Activated T-helper 1 cell treated with anti-CD3 and anti-CD28 coated beads, Interleukin-12 subunit alpha, Interleukin-12 subunit beta, Interleukin-2, Interleukin-4 antibody, amounts not matched to agents 30 ng/mL and 10 ng/mL and 1 ng/mL, durations not matched to agents 14 hours and 24 hours and 36 hours (primary cell): ENCODE measurements at regions of chr2 and their contacts with region 1.

Region 1: DNA sequence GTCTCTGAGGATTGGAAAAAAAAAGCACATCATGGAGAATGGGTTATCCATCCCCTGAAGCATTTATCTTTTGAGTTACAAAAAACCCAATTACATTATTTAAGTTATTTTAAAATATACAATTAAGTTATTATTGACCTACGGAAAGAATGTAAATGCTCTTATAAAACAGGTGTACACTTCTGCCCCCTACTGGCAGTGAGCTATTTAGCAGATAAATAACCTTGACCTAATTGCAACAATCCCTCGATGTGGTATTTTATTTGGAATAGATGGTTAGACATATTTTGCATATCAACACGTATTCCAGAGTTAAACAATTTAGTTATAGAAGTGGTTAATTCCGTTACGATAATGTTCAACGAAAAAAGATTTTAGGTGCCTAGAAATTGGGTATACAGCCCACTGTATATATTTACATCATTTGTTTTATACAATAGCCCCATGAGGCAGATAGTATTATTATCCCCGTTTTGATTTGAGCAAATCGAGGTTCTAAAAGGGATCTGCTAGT is 9.1 kb upstream of the DAW1 start:
- DNase-seq: no peak
- H3K4me3 Mint-ChIP-seq: no peak overlapping the region
- H3K27ac Mint-ChIP-seq: no peak overlapping the region
- H3K4me1 Mint-ChIP-seq: no peaks in the 10 kb centered on the region
- H3K27me3 Mint-ChIP-seq: peaks cover 5% of the 10 kb centered on the region

Region 2: DNA sequence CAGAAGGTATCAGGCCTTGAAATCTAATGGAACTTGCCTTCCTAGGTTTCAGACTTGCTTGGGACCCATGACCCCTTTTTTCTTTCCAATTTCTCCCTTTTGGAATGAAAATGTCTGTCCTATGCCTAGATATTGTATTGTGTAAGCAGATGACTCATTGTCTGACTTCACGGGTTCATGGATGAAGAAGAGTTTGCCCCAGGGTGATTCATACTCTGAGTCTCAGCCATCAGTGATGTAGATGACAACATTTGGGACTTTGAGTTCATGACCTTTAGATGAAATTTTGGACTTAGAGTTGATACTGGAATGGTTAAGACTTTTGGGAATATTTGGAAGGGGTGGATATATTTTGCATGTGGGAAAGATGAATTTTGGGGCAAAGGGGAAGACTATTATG is 206.8 kb before region 1 on chr2:
- intact Hi-C with region 1: loop called (anchors 1 kb)
- DNase-seq: no peak
- H3K4me3 Mint-ChIP-seq: no peak overlapping the region
- H3K27ac Mint-ChIP-seq: no peak overlapping the region
- H3K4me1 Mint-ChIP-seq: no peaks in the 10 kb centered on the region
- H3K27me3 Mint-ChIP-seq: peaks cover 3% of the 10 kb centered on the region

Region 3: DNA sequence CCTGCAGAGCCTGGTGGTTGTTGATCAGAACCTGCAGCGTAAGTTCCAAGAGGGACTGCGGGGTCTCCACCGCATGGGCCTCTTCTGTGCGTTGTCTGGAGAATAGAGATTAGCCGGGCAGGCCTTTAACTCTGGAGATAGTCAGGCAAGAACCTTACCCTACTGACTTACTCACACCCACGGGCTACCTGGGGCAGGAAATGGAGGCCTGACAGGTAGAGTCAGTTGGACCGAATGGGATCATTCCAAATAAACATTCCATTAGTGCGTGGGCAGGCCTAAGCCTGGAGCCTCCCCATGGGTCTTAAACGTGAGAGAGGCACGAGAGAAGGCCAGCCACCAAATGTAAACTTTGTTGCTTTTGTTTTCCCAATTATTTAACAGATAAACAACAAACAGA is 118.0 kb before region 1 on chr2:
- intact Hi-C with region 1: loop called (anchors 1 kb)
- DNase-seq: no peak
- H3K4me3 Mint-ChIP-seq: no peak overlapping the region
- H3K27ac Mint-ChIP-seq: no peak overlapping the region
- H3K4me1 Mint-ChIP-seq: no peaks in the 10 kb centered on the region
- H3K27me3 Mint-ChIP-seq: no peaks in the 10 kb centered on the region

Region 4: DNA sequence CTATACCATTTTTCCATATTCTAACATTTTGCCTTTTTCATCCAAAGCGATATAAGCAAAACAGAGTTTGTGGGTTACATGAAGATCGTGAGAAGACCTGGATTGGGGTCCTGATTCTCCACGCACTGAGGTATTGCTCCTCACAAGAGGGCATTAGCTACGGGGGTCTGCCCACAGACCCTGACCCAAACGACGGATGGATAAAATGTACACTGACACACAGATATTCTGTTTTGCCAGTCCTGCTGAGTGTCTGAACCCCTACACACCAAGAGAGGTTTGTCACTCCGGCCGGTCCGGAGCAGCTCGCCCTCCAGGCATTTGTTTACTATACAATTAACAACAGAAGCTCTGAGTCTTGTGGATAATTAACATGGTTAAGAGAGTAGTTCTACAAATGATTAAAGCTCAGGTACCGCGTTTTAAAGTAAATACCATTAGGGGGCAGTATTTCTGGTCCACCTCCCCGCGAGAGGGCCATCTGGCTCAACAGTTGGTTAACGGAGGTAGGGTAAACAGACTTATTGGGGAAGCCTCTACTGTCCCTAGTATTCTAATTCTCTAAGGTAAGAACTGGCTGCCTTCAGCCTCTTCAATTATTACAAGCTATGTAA is 88.2 kb before region 1 on chr2:
- intact Hi-C with region 1: loop called (anchors 2 kb)
- DNase-seq: no peak
- H3K4me3 Mint-ChIP-seq: no peak overlapping the region
- H3K27ac Mint-ChIP-seq: no peak overlapping the region
- H3K4me1 Mint-ChIP-seq: no peaks in the 10 kb centered on the region
- H3K27me3 Mint-ChIP-seq: no peaks in the 10 kb centered on the region

Region 5: GRCh38 chr2:227789803-227790202 is 72.5 kb before region 1 on chr2:
- intact Hi-C with region 1: no loop called
- DNase-seq: no peak
- H3K4me3 Mint-ChIP-seq: no peak overlapping the region
- H3K27ac Mint-ChIP-seq: no peak overlapping the region
- H3K4me1 Mint-ChIP-seq: no peaks in the 10 kb centered on the region
- H3K27me3 Mint-ChIP-seq: peaks cover 7% of the 10 kb centered on the region

Region 6: DNA sequence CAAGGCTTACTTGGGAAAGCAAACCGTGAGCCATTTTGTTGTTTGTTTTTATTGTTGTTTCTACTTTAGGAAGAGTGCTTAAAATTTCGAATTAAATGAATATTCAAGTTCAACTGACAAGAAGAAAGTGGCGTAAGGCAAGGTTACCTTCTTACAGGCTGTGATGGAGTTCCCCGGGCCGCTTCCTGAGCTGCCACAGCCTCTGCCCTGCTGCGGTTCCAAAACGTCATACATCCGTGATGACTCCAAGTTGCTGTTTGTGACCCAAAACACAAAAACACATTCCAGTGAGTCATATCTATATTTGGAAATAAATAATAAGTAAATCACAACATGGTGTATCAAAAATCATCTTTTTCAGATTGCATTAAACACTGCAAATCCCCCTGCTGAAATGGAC is 269.5 kb after region 1 on chr2:
- intact Hi-C with region 1: no loop called
- DNase-seq: no peak
- H3K4me3 Mint-ChIP-seq: no peak overlapping the region
- H3K27ac Mint-ChIP-seq: no peak overlapping the region
- H3K4me1 Mint-ChIP-seq: no peaks in the 10 kb centered on the region
- H3K27me3 Mint-ChIP-seq: no peaks in the 10 kb centered on the region